ENCODE measurements at regions of chr5 and their contacts with region 1.

Region 1: GRCh38 chr5:102583276-102584124 is 84.7 kb upstream of the SLCO6A1 start:
- DNase-seq: no peak
- ATAC-seq: no peak
- H3K4me3 ChIP-seq: no peak overlapping the region
- H3K27ac ChIP-seq: no peak overlapping the region
- H3K4me1 ChIP-seq: peaks cover 4% of the 10 kb centered on the region
- H3K27me3 ChIP-seq: no peaks in the 10 kb centered on the region
- CTCF ChIP-seq: peak in 6 of 7 experiments; percentile 27 to 54 (median 44)
- POLR2A ChIP-seq: no peak

Region 2: GRCh38 chr5:102324714-102325113 is 258.8 kb before region 1 on chr5:
- intact Hi-C with region 1: no loop called
- DNase-seq: no peak
- ATAC-seq: no peak
- H3K4me3 ChIP-seq: no peak overlapping the region
- H3K27ac ChIP-seq: no peak overlapping the region
- H3K4me1 ChIP-seq: no peaks in the 10 kb centered on the region
- H3K27me3 ChIP-seq: no peaks in the 10 kb centered on the region
- CTCF ChIP-seq: no peak
- POLR2A ChIP-seq: no peak

Region 3: DNA sequence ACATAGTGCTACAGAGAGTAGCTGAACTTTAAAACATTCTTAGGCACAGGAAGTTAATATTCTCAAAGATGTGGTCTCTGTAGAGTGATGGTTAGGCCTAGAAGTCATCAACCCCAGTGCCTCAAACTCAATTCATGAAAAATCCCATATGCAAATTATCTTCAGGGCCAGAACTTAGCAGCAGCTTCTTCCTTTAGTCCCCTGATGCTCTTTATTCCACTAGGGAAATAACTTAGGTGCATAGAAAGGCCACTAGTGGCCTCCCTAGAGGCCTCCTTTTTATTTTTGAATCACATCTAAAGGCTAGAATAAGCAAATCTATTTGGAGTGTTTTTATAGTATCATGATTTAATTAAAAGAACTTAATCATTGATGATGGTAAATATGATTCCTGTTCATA is 448.1 kb after region 1 on chr5:
- intact Hi-C with region 1: loop called (anchors 10 kb)
- DNase-seq: no peak
- ATAC-seq: no peak
- H3K4me3 ChIP-seq: no peak overlapping the region
- H3K27ac ChIP-seq: no peak overlapping the region
- H3K4me1 ChIP-seq: no peaks in the 10 kb centered on the region
- H3K27me3 ChIP-seq: no peaks in the 10 kb centered on the region
- CTCF ChIP-seq: peak in 5 of 7 experiments; percentile 6 to 16 (median 12)
- POLR2A ChIP-seq: no peak

Measured in body of pancreas (tissue), 4 donors.